ENCODE measurements at regions of chr12 and their contacts with region 1.

Region 1: DNA sequence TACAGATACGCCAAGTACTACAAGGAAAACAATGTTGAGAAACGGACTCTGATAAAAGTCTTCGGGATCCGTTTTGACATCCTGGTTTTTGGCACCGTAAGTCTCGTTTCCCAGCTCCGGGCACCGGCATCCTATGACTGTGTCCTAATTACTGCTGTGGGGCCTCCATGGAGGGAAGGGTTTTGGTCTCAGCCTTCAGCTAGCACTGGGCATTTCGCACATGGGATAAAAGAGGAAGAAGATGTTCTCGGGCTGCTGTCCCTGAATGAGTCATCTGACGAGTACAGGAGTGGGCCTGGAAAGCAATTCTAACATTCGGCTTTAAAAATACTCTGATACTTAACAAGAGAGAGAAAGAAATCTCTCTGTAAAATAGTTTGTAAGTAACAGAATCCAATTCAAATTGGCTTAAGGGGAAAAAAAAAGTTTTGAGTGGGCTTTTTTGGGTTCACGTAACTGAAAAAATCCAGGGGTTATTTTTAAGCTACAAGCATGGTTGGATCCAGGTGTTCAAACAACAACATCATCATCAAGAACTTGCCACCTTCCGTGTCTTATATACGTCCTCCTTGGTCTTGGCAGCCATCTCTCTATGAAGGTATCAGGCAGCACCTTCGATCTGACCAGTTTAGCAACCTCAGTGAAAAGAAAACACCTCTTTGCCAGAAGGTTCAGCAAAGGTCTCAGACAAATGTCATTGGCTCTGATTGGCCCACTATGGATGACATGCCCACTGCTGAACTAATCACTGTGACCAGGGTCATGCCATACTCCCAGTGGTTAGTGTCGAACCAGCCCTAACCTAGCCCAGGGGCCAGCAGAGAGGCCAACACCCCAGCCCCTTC is 34.3 kb upstream of the P2RX4 start:
- DNase-seq: peak in 8 of 10 donors; percentile 47 to 79 (median 64)
- H3K4me3 ChIP-seq: peak overlapping the region in 1 of 59 donors; percentile 4
- H3K27ac ChIP-seq: peak overlapping the region in 58 of 59 donors; percentile 54 to 96 (median 90)
- H3K27me3 ChIP-seq: no peaks in the 10 kb centered on the region
- CTCF ChIP-seq: no peak

Region 2: DNA sequence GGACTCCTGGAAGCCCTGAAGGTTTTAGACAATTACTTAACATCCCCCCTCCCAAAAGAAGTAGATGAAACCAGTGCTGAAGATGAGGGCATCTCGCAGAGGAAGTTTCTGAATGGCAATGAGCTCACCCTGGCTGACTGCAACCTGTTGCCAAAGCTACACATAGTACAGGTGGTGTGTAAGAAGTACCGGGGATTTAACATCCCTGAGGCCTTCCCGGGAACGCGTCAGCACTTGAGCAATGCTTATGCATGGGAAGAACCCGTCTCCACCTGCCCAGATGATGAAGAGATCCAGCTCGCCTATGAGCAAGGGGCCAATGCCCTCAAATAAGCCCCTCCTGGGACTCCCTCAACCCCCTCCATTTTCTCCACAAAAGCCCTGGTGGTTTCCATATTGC is 260.8 kb before region 1 on chr12:
- intact Hi-C with region 1: no loop called
- DNase-seq: no peak
- H3K4me3 ChIP-seq: no peak overlapping the region
- H3K27ac ChIP-seq: no peak overlapping the region
- H3K27me3 ChIP-seq: no peaks in the 10 kb centered on the region
- CTCF ChIP-seq: no peak

Region 3: GRCh38 chr12:121128970-121129810 is 46.4 kb before region 1 on chr12:
- intact Hi-C with region 1: loop called in 1 of 2 experiments (anchors 5 kb)
- DNase-seq: peak; percentile 58 to 98 (median 92)
- H3K4me3 ChIP-seq: peak overlapping the region in 54 of 59 donors; percentile 2 to 58 (median 34)
- H3K27ac ChIP-seq: peak overlapping the region; percentile 74 to 99 (median 97)
- H3K27me3 ChIP-seq: no peaks in the 10 kb centered on the region
- CTCF ChIP-seq: peak in 4 of 56 donors; percentile 5 to 25 (median 13)

Region 4: GRCh38 chr12:121154793-121155375 is 20.7 kb before region 1 on chr12:
- intact Hi-C with region 1: loop called in 1 of 2 experiments (anchors 2 kb)
- DNase-seq: peak in 3 of 10 donors; percentile 41 to 64 (median 47)
- H3K4me3 ChIP-seq: no peak overlapping the region
- H3K27ac ChIP-seq: peak overlapping the region; percentile 46 to 95 (median 86)
- H3K27me3 ChIP-seq: no peaks in the 10 kb centered on the region
- CTCF ChIP-seq: no peak

Region 5: DNA sequence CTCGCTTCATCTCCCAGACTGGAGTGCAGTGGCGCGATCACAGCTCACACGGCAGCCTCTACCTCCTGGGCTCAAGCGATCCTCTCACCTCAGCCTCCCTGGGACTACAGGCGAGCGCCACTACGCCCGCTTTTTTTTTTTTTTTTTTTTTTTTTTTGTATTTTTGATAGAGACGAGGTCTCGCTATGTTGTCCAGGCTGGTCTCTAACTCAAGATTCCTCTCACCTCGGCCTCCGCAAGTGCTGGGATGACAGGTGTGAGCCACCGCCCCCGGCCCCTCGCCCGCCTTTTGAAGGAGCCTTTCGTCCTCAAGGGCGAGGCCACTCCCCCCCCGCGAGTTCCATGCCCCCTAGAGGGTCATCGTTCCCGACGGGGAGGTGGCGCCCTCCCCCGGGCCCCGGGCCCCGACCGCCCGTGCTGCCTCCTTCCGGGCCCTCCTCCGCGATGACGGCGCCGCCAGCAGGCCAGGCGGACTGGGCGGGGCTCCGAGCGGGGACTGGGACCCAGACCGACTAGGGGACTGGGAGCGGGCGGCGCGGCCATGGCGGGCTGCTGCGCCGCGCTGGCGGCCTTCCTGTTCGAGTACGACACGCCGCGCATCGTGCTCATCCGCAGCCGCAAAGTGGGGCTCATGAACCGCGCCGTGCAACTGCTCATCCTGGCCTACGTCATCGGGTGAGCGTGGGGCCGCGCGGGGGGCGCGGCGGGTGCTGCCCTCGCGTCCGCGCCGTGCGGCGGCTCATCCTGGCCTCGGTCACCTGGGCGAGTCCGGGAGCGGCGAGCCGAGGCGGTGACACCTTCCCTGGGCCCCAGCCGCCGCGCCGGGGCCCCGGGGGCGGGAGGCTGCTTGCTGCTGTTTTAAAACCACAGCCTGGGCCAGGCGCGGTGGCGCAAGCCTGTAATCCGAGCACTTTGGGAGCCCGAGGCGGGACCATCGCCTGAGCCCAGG is 34.3 kb after region 1 on chr12 and contains the start of gene P2RX4:
- intact Hi-C with region 1: loop called in 1 of 2 experiments (anchors 5 kb)
- DNase-seq: peak; percentile 66 to 91 (median 83)
- H3K4me3 ChIP-seq: peak within 1 kb of the TSS; percentile 62 to 96 (median 81)
- H3K27ac ChIP-seq: peak within 1 kb of the TSS; percentile 68 to 98 (median 94)
- H3K27me3 ChIP-seq: no peaks in the 10 kb centered on the region
- CTCF ChIP-seq: peak in 54 of 56 donors; percentile 14 to 80 (median 52)
- total RNA-seq, gene P2RX4: 7.6 to 21.4 (median 12.6) TPM